ENCODE measurements at regions of chr15 and their contacts with region 1.

Region 1: GRCh38 chr15:70569091-70569621 is 194.2 kb downstream of the UACA start:
- DNase-seq: peak; percentile 71
- ATAC-seq: peak; percentile 95
- H3K4me3 ChIP-seq: no peak overlapping the region
- H3K27ac ChIP-seq: no peak overlapping the region
- H3K4me1 ChIP-seq: 0 out of 2 replicates have a peak, but pooled peaks cover 2% of the 10 kb centered on the region
- H3K27me3 ChIP-seq: peaks cover 18% of the 10 kb centered on the region
- CTCF ChIP-seq: peak; percentile 63
- POLR2A ChIP-seq: no peak
- RAD21 ChIP-seq: peak; percentile 67

Region 2: DNA sequence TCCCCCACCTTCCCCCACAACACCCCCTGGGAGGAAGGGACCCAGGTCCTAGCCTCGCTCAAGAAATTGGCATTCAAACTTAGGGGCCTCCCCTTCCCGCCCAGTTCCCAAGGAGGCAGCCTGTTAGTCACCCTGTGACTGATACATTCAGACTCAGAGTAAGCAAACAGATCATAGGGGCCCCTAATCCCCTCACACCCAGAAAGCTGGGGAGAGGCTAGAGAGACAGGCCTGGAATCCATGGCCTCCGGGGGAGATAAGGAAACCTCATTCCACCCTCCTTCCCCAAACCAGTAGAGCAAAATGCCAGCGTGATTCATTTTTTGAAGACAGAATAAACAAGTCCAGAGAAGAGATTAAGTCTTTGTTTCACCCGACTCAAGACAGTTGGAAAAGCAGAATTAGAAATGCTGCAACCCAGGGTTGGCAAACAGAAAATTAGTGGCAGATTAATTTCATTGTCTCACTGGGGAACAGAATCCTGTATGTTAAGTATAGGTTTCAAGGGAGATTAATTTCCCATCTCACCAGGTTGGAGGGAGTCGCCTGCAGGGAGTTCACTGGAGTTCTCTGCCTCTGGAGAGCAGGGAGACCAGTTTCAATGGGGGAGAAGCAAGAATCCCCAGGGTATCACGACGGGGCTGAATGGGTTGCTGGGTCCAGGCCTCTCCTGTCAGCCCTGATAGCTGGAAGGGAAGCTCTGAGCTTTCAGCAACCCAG is 74.1 kb before region 1 on chr15:
- CTCF ChIA-PET with region 1: no interaction called
- POLR2A ChIA-PET with region 1: no interaction called
- dilution Hi-C with region 1: no loop called
- in situ Hi-C with region 1: no loop called
- intact Hi-C with region 1: loop called (anchors 5 kb)
- DNase-seq: peak; percentile 96
- ATAC-seq: peak; percentile 88
- H3K4me3 ChIP-seq: no peak overlapping the region
- H3K27ac ChIP-seq: peak overlapping the region; percentile 18; the same call in 1 of the 2 replicates
- H3K4me1 ChIP-seq: peaks cover 36% of the 10 kb centered on the region
- H3K27me3 ChIP-seq: peaks cover 9% of the 10 kb centered on the region
- CTCF ChIP-seq: no peak
- POLR2A ChIP-seq: no peak
- RAD21 ChIP-seq: peak; percentile 11; the same call in 1 of the 2 replicates

Region 3: GRCh38 chr15:70636540-70637165 is 67.5 kb after region 1 on chr15:
- CTCF ChIA-PET with region 1: no interaction called
- POLR2A ChIA-PET with region 1: no interaction called
- dilution Hi-C with region 1: no loop called
- in situ Hi-C with region 1: no loop called
- intact Hi-C with region 1: loop called (anchors 1 kb)
- DNase-seq: no peak
- ATAC-seq: peak; percentile 38; the same call in 1 of the 2 replicates
- H3K4me3 ChIP-seq: no peak overlapping the region
- H3K27ac ChIP-seq: no peak overlapping the region
- H3K4me1 ChIP-seq: peaks cover 2% of the 10 kb centered on the region; the same call in 1 of the 2 replicates
- H3K27me3 ChIP-seq: no peaks in the 10 kb centered on the region
- CTCF ChIP-seq: peak; percentile 44
- POLR2A ChIP-seq: no peak
- RAD21 ChIP-seq: peak; percentile 47

Measured in IMR-90 (cell line).